SK-N-SH (cell line): ENCODE measurements at regions of chr14 and their contacts with region 1.

Region 1: GRCh38 chr14:77320238-77320935 is at the start of gene POMT2:
- DNase-seq: peak; percentile 89
- H3K4me3 ChIP-seq: peak within 1 kb of the TSS; percentile 99 to 100
- H3K27ac ChIP-seq: peak within 1 kb of the TSS; percentile 96 to 98
- H3K4me1 ChIP-seq: peaks cover 0 to 22% of the 10 kb centered on the region in 2 experiments; a peak in 2 of 4 replicates
- H3K27me3 ChIP-seq: no peaks in the 10 kb centered on the region
- CTCF ChIP-seq: peak; percentile 50
- EP300 ChIP-seq: no peak
- RAD21 ChIP-seq: no peak
- polyA plus RNA-seq, gene POMT2: 19.9 and 22.8 TPM in 2 replicates

Region 2: DNA sequence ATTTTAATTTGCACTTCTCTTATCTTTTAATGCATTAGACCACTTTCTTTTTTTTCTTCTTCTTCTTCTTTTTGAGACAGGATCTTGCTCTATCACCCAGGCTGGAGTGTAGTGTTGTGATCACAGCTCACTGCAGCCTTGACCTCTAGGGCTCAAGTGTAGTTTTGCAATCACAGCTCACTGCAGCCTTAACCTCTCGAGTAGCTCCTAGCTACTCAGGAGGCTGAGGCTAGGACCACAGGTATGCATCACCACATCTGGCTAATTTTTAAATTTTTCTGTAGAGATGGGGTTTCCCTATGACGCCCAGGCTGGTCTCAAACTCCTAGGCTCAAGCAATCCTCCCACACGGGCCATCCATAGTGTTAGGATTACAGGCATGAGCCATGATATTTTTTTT is 43.8 kb after region 1 on chr14:
- CTCF ChIA-PET with region 1: no interaction called
- POLR2A ChIA-PET with region 1: no interaction called
- DNase-seq: no peak
- H3K4me3 ChIP-seq: no peak overlapping the region
- H3K27ac ChIP-seq: no peak overlapping the region
- H3K4me1 ChIP-seq: no peaks in the 10 kb centered on the region
- H3K27me3 ChIP-seq: no peaks in the 10 kb centered on the region
- CTCF ChIP-seq: no peak
- EP300 ChIP-seq: no peak
- RAD21 ChIP-seq: no peak

Region 3: GRCh38 chr14:77376771-77377501 is 56.5 kb after region 1 on chr14 and contains the starts of genes SAMD15 and TMED8:
- CTCF ChIA-PET with region 1: interaction called, 3 read pairs
- POLR2A ChIA-PET with region 1: interaction called, 10 read pairs
- DNase-seq: peak; percentile 95
- H3K4me3 ChIP-seq: peak within 1 kb of the TSS; percentile 95 to 98
- H3K27ac ChIP-seq: peak within 1 kb of the TSS; percentile 97 to 99
- H3K4me1 ChIP-seq: peaks cover 4 to 11% of the 10 kb centered on the region in 2 experiments; a peak in 3 of 4 replicates
- H3K27me3 ChIP-seq: no peaks in the 10 kb centered on the region
- CTCF ChIP-seq: peak; percentile 43
- EP300 ChIP-seq: no peak
- RAD21 ChIP-seq: no peak
- polyA plus RNA-seq, gene SAMD15: 1.7 and 3.0 TPM in 2 replicates
- polyA plus RNA-seq, gene TMED8: 2.3 and 3.2 TPM in 2 replicates

Region 4: DNA sequence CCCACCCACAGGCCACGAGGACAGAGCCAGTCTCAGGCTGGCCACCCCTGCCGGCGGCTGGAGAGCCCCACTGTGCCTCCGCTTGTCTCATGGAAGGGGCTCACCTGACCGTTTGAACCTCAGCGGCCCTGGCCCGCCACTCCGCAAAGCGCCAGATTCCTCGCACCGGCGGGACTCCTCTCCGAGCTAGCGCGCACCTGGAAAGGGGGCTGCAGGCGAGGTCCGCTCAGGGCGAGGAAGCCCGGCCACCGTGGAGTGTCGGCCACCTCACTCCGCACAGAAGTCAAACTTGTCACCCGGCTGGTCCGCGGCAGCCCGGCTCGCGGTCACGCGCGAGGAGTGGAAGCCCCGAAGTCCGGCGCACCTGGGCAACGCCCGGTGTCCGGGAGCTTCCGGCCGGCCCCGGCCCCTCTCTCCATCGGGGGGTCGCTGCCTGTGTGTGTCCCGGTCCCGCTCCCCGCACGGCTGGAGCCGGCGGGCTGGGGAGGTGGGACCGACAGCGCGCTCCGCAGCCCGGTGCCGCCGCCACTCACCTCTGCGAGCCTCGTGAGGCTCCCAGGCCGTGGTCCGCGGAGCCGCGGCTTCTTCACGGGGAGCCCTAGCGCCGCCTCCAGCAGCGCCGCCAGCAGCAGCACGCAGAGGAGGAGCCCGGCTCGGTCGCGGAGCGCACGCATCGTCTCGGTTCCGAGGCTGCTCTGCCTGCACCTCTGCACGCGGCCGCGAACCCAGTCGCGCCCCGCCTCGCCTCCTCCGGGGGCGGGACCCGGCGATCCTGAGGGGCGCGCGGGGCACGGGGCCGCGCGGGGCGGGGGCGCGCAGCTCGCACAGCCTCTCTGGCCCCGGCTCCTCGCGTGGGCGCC is 178.0 kb after region 1 on chr14 and contains the start of gene ISM2:
- CTCF ChIA-PET with region 1: no interaction called
- POLR2A ChIA-PET with region 1: no interaction called
- DNase-seq: peak; percentile 86
- H3K4me3 ChIP-seq: peak within 1 kb of the TSS; percentile 47 to 66
- H3K27ac ChIP-seq: no peak within 1 kb of the TSS
- H3K4me1 ChIP-seq: peaks cover 0 to 8% of the 10 kb centered on the region in 2 experiments; a peak in 1 of 4 replicates
- H3K27me3 ChIP-seq: no peaks in the 10 kb centered on the region; the same call in 1 of the 2 replicates
- CTCF ChIP-seq: no peak
- EP300 ChIP-seq: no peak
- RAD21 ChIP-seq: no peak
- polyA plus RNA-seq, gene ISM2: 0.08 and 0.20 TPM in 2 replicates